ENCODE measurements at regions of chr14 and their contacts with region 1.

Region 1: GRCh38 chr14:67583711-67584644 is 16.1 kb downstream of the PIGH start:
- DNase-seq: peak; percentile 64
- H3K4me3 ChIP-seq: no peak overlapping the region
- H3K27ac ChIP-seq: no peak overlapping the region
- H3K4me1 ChIP-seq: no peaks in the 10 kb centered on the region
- CTCF ChIP-seq: peak; percentile 85

Region 2: DNA sequence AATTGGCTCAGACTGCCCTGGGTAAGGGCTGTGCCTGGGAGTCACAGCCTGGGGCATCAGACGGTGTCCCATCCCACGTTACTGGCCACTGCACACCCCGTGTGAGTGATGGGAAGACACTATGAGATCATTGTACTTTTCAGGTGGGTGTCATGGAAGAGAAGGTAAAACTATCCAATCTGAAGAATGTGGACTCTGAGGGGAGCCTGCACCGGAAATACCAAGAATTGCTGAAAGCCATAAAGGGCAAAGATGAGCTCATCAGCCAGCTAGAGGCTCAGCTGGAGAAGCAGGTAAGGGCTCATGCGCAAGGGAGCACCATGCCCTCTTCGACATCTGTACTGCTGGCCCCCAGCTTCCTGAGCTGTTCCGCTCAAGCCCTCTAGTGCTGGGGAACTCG is 26.9 kb before region 1 on chr14:
- CTCF ChIA-PET with region 1: no interaction called
- POLR2A ChIA-PET with region 1: interaction called, 11 read pairs
- intact Hi-C with region 1: no loop called
- DNase-seq: no peak
- H3K4me3 ChIP-seq: no peak overlapping the region
- H3K27ac ChIP-seq: no peak overlapping the region
- H3K4me1 ChIP-seq: no peaks in the 10 kb centered on the region
- CTCF ChIP-seq: no peak

Region 3: DNA sequence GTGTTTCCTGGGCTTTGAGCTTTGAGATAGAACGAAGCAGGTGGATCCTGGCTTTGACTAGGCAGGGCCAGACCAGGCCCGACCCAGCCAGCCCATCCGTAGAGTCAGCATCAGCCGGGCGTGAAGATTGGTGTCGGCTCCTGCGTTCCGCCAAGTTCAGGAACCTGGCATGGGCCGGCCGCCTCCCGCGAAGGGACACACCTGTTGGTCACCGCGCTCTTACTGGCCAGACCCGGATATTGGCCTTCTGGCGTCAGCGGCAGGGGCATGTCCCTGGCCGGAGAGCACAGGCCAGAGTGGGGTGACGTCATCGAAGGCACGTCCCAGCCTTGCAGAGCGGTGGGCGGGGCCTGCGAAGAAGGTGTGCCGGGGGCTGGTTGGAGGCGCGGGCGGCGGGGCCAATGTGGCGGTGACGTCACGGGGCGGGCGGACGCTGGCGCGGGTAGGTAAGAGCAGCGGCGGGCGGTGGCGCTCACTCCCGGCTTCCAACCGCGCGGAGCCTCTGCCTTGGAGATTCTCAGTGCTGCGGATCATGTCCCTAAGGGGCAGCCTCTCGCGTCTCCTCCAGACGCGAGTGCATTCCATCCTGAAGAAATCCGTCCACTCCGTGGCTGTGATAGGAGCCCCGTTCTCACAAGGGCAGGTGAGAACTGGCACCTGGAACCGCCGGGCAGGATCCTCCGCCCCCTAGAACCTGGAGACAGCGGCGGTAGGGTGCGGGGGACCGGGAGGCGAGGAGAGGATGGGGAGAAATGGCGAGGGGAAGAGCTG is 35.7 kb after region 1 on chr14 and contains the start of gene ARG2:
- CTCF ChIA-PET with region 1: interaction called, 3 read pairs
- POLR2A ChIA-PET with region 1: no interaction called
- intact Hi-C with region 1: loop called (anchors 1 kb)
- DNase-seq: peak; percentile 85
- H3K4me3 ChIP-seq: peak within 1 kb of the TSS; percentile 70
- H3K27ac ChIP-seq: no peak within 1 kb of the TSS
- H3K4me1 ChIP-seq: peaks cover 25% of the 10 kb centered on the region
- CTCF ChIP-seq: no peak; the same call in 1 of the 2 replicates
- total RNA-seq, gene ARG2: 2.9 and 4.2 TPM in 2 replicates

Region 4: GRCh38 chr14:67666750-67667449 is 82.9 kb after region 1 on chr14:
- CTCF ChIA-PET with region 1: interaction called, 5 read pairs
- POLR2A ChIA-PET with region 1: interaction called, 6 read pairs
- intact Hi-C with region 1: loop called (anchors 1 kb)
- DNase-seq: peak; percentile 63
- H3K4me3 ChIP-seq: no peak overlapping the region
- H3K27ac ChIP-seq: no peak overlapping the region
- H3K4me1 ChIP-seq: peaks cover 21% of the 10 kb centered on the region
- CTCF ChIP-seq: peak; percentile 86

Measured in OCI-LY7 (cell line).